ENCODE measurements at regions of chr19 and their contacts with region 1.

Region 1: GRCh38 chr19:8494158-8494557 is 8.3 kb downstream of the PRAM1 start:
- DNase-seq: peak in 2 of 10 donors; percentile 33 to 54
- ATAC-seq: peak; percentile 56 to 60
- H3K4me3 Mint-ChIP-seq: peak overlapping the region in 9 of 10 donors; percentile 7 to 69 (median 42)
- H3K27ac Mint-ChIP-seq: peak overlapping the region; percentile 66 to 90 (median 84)
- H3K4me1 Mint-ChIP-seq: peaks cover 20 to 42% (median 26%) of the 10 kb centered on the region in 4 donors
- H3K27me3 Mint-ChIP-seq: no peaks in the 10 kb centered on the region

Region 2: DNA sequence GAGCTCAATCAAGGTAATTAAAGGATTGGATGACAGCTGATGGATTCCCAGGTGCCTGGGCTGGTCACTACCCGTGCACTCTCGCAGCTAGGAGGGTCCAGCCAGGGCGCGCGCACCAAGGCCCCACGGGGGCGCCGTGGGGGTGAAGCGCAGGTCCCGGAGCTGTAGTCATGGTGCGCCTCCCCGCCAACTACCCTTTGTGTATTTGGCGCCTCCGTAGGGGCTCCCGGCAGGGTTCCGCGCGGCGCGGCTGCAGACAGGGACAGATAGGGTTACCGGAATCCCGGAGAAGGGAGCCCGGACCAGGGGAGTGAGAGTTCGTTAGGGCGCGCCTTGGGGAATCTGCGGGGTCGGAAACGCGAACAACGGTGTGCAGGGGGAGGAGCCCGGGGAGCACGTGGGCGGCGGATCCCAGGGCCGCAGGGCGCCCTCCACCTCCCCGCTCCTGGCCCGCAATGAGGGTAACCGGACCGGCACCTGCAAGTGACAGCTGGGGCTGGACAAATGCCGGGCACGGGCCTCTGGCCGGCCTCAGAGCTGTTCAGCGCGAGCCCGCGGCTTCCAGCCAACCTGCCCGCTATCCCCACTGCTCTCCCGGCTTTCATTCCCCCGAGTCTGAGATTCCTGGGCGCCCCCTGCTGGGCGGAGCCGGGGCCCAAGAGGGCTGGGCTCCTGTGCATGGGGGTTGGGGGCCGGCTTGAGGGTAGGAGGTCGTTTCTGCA is 11.7 kb after region 1 on chr19:
- POLR2A ChIA-PET with region 1: interaction called, 12 read pairs
- DNase-seq: peak; percentile 34 to 78 (median 64)
- ATAC-seq: peak; percentile 83 to 86
- H3K4me3 Mint-ChIP-seq: peak overlapping the region; percentile 90 to 97 (median 94)
- H3K27ac Mint-ChIP-seq: peak overlapping the region; percentile 68 to 95 (median 92)
- H3K4me1 Mint-ChIP-seq: peaks cover 14 to 38% (median 26%) of the 10 kb centered on the region in 4 donors
- H3K27me3 Mint-ChIP-seq: no peaks in the 10 kb centered on the region

Measured in naive thymus-derived CD8-positive, alpha-beta T cell (primary cell).